ENCODE measurements at regions of chr1 and their contacts with region 1.

Region 1: DNA sequence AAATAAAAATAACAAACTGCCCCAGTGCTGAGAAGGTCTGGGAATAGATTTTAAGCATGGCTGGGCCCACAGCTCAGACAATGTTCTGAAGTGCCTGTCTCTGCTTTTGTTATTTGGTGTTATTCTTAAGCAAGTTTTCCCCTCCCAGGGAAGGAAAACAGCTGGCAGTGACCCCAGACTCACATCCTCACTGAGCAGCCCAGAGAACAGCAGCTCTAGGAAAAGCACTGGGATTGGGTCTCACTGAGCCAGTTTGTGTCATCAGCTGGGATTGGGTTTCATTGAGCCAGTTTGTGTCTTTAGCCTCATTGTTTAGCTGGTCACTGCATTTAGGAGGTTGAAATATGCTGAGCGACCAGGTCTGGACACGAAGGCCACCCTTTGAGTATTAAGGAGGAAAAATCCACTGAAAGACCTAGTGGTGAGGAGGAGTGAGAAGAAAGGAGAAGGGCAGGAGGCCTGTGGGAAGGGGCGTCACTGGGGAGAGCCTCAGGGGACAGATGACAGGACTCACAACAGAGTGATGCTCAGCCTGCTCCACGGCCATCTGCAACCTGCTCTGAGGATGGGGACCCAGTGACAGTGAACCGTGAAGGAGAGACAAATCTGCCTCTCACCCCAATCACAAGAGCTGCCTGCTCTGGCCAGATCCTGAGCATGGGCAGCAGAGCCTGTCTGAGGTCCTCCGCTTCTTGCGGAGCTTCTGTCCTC is 103.8 kb downstream of the TOMM20 start:
- DNase-seq: no peak
- H3K4me3 Mint-ChIP-seq: no peak overlapping the region
- H3K27ac Mint-ChIP-seq: peak overlapping the region; percentile 10
- H3K4me1 Mint-ChIP-seq: peaks cover 18% of the 10 kb centered on the region
- H3K27me3 Mint-ChIP-seq: no peaks in the 10 kb centered on the region
- CTCF ChIP-seq: no peak

Region 2: GRCh38 chr1:234676103-234676594 is 348.7 kb before region 1 on chr1:
- CTCF ChIA-PET with region 1: no interaction called
- intact Hi-C with region 1: no loop called
- DNase-seq: peak; percentile 81
- H3K4me3 Mint-ChIP-seq: peak overlapping the region; percentile 59
- H3K27ac Mint-ChIP-seq: no peak overlapping the region
- H3K4me1 Mint-ChIP-seq: peaks cover 16% of the 10 kb centered on the region
- H3K27me3 Mint-ChIP-seq: no peaks in the 10 kb centered on the region
- CTCF ChIP-seq: no peak

Region 3: GRCh38 chr1:234907940-234908405 is 116.9 kb before region 1 on chr1:
- CTCF ChIA-PET with region 1: no interaction called
- intact Hi-C with region 1: no loop called
- DNase-seq: no peak
- H3K4me3 Mint-ChIP-seq: no peak overlapping the region
- H3K27ac Mint-ChIP-seq: no peak overlapping the region
- H3K4me1 Mint-ChIP-seq: peaks cover 23% of the 10 kb centered on the region
- H3K27me3 Mint-ChIP-seq: no peaks in the 10 kb centered on the region
- CTCF ChIP-seq: no peak

Region 4: DNA sequence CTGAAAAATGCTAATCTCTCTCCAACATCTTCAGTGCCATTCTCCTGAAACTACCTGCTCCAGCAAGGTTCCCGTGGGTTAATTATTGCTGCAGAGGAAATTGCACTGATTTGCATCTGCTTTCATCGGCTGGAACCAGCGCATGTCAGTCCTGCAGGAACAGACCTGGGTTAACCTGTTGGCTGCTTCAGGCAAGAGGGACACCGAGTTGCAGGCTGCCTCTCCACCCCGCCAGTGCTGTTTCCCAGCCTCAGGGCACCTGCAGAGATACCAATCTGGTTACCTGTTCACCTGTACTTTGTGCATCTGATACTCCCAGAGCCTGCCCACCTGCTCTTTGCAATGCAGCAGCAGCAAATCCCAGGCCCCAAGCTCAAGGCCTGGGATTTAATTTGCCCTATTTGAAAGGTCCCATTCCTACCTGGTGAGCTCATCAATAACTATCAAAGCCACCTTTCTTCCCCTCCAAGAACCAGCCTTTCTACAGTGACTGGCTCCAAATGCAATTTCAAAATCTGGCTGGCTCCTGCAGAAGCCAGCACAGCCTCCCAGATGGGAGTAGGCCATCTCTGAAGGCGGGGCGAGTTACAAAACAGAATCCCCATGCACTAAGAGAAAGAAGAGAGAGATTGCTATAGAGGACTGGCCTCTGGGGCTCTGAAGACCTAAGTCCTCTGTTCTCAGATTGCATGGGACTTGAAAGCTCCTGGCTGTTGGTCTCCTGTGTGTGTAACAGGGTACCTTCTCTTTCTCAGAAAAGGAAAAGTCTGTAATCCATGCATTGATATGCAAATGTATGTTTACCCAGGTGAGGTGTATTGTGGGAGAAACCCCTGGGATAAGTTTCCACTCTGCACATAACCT is 36.0 kb after region 1 on chr1:
- CTCF ChIA-PET with region 1: no interaction called
- intact Hi-C with region 1: loop called (anchors 5 kb)
- DNase-seq: peak; percentile 74
- H3K4me3 Mint-ChIP-seq: peak overlapping the region; percentile 25
- H3K27ac Mint-ChIP-seq: peak overlapping the region; percentile 85
- H3K4me1 Mint-ChIP-seq: peaks cover 70% of the 10 kb centered on the region
- H3K27me3 Mint-ChIP-seq: no peaks in the 10 kb centered on the region
- CTCF ChIP-seq: no peak

Measured in Calu3 (cell line).